IMR-90 (cell line): ENCODE measurements at regions of chr1 and their contacts with region 1.

Region 1: DNA sequence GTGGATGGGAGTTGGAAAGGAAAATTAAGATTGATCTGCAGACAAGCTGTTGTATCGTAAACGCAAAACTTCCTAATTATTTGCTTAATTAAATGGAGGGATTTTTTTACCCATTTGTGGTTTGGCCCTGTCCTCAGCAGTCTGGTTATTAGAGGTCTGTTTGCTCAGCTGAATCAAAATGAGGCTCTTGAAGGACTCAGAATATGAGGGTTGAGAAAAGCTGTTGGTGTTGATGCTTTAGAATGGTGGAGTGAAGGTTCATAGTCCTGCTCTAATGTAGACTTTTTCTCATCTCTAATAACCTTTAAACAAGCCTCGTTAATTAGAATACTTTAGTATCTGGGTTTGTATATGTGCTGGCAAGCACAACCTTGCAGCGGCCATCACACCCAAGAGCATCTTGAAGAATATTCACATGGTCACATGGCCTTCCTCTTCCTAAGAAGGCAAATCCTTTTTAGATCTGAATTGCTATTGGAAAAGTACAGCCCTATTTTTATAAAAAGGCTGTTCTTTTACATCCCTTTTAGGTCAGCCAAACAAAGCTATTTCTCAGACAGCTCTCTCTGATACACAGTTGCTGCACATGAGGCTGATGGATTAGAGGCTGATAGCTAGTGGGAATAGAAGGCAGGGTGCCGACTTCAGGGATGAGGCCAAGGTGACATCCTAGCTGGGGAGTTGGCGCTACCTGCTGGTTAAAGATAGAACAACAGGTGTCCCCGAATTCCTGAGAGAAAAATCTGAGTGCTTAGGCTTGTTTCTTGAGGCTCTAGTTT is 53.8 kb downstream of the MACF1 start:
- DNase-seq: peak; percentile 65
- ATAC-seq: peak; percentile 57
- H3K4me3 ChIP-seq: no peak overlapping the region
- H3K27ac ChIP-seq: no peak overlapping the region
- H3K4me1 ChIP-seq: peaks cover 10% of the 10 kb centered on the region
- H3K27me3 ChIP-seq: no peaks in the 10 kb centered on the region
- CTCF ChIP-seq: peak; percentile 72
- POLR2A ChIP-seq: no peak
- RAD21 ChIP-seq: peak; percentile 86

Region 2: DNA sequence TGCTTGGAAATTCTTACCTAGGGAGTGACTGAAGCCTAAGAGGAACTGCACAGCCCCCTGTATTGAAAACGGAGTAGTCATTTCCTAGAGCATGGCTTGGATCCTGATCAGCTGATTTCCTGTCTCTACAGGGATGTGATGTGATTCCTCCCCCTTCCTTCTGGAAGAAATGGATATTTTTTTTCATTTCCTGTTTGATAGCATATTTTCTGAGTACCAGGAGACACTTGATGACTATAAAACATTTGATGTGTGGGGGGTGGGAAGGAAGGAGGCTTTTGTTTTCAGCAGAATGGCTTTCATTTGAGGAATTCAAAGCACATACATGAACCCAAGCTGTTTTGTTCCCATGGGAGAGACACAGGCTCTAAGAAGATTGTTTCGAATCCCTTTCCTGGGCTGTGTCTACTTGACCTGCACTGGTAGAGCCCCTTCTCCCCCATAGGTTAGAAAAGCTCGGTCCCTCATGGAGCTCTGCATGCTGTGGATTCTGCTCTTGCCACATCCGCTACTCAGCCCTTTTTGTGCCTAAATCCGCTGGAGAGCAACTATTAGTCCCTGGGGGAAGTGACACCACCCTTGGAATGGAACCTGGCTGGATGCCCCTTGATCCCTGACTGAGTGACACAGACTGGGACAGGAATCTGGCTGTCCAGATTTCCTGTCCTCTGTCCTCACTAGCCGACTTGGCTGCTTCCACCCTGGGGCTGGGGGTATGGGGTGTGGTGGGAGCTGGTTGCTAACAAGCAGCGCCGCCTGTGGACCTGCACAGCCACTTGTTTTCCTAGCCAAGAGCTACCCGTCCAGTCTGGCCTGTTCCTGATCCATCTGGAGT is 125.6 kb before region 1 on chr1:
- CTCF ChIA-PET with region 1: no interaction called
- POLR2A ChIA-PET with region 1: no interaction called
- dilution Hi-C with region 1: no loop called
- in situ Hi-C with region 1: no loop called
- intact Hi-C with region 1: loop called (anchors 10 kb)
- DNase-seq: peak; percentile 57
- ATAC-seq: peak; percentile 22
- H3K4me3 ChIP-seq: no peak overlapping the region
- H3K27ac ChIP-seq: peak overlapping the region; percentile 51
- H3K4me1 ChIP-seq: peaks cover 37% of the 10 kb centered on the region
- H3K27me3 ChIP-seq: no peaks in the 10 kb centered on the region
- CTCF ChIP-seq: no peak
- POLR2A ChIP-seq: no peak
- RAD21 ChIP-seq: no peak

Region 3: DNA sequence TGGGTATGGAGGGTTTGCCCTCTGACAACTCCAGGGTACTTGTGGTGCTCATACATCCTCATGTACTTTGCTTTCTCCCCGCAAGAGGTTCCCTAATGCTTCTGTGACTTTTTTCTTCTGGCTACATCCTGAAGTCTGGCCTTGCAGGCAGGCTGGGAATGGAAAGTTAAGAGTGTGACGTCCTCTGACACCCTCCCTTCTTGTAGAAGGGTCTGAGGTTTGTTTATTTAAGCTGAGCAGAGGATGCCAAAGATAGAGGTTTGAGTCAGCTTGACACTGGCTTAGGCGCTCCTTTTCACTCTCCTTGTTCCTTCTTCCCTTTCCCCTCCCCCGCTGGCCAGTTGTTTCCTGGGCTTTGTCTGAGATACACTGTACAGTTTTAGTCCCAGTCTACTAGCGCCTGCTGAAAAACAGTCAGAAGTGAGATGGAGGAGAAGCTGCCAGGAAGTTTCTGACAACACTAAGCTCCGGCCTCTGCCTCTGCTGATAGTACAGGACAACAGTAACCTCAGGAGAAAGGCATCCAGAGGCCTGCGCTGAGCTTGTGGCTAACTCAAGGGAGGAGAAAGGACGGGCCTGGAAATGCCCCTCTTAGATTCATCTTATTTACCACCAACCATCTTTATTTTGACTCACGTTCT is 53.8 kb before region 1 on chr1 and contains the start of gene MACF1:
- CTCF ChIA-PET with region 1: interaction called, 7 read pairs
- POLR2A ChIA-PET with region 1: no interaction called
- dilution Hi-C with region 1: no loop called
- in situ Hi-C with region 1: loop called (anchors 5 kb)
- intact Hi-C with region 1: loop called (anchors 1 kb)
- DNase-seq: peak; percentile 98
- ATAC-seq: peak; percentile 83
- H3K4me3 ChIP-seq: peak within 1 kb of the TSS; percentile 54
- H3K27ac ChIP-seq: peak within 1 kb of the TSS; percentile 91
- H3K4me1 ChIP-seq: peaks cover 2% of the 10 kb centered on the region
- H3K27me3 ChIP-seq: no peaks in the 10 kb centered on the region
- CTCF ChIP-seq: peak; percentile 59
- POLR2A ChIP-seq: peak; percentile 52
- RAD21 ChIP-seq: peak; percentile 65
- total RNA-seq, gene MACF1: 368 and 369 TPM in 2 replicates

Region 4: GRCh38 chr1:39220891-39221870 is 37.2 kb before region 1 on chr1:
- CTCF ChIA-PET with region 1: interaction called, 3 read pairs
- POLR2A ChIA-PET with region 1: interaction called, 11 read pairs
- dilution Hi-C with region 1: no loop called
- in situ Hi-C with region 1: no loop called
- intact Hi-C with region 1: no loop called
- DNase-seq: no peak
- ATAC-seq: no peak
- H3K4me3 ChIP-seq: no peak overlapping the region
- H3K27ac ChIP-seq: no peak overlapping the region
- H3K4me1 ChIP-seq: no peaks in the 10 kb centered on the region; the same call in 1 of the 2 replicates
- H3K27me3 ChIP-seq: no peaks in the 10 kb centered on the region
- CTCF ChIP-seq: no peak
- POLR2A ChIP-seq: no peak
- RAD21 ChIP-seq: no peak